ENCODE measurements at regions of chr5 and their contacts with region 1.

Region 1: DNA sequence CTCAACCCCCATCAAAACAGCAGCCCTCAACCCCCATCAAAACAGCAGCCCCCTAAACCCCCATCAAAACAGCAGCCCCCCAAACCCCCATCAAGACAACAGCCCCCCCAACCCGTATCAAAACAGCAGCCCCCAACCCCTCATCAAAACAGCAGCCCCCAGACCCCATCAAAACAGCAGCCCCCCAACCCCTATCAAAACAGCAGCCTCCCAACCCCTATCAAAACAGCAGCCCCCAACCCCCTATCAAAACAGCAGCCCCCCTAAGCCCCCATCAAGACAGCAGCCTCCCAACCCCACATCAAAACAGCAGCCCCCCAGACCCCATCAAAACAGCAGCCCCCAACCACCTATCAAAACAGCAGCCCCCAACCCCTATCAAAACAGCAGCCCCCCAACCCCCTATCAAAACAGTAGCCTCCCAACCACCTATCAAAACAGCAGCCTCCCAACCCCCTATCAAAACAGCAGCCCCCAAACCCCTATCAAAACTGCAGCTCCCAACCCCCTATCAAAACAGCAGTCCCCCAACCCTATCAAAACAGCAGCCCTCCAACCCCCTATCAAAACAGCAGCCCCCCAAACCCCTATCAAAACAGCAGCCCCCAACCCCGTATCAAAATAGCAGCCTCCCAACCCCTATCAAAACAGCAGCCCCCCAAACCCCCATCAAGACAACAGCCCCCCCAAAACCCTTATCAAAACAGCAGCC is 1.2 kb downstream of the TPPP start:
- DNase-seq: no peak
- H3K4me3 ChIP-seq: no peak overlapping the region
- H3K27ac ChIP-seq: no peak overlapping the region
- H3K4me1 ChIP-seq: no peaks in the 10 kb centered on the region
- H3K27me3 ChIP-seq: no peaks in the 10 kb centered on the region
- CTCF ChIP-seq: no peak

Region 2: DNA sequence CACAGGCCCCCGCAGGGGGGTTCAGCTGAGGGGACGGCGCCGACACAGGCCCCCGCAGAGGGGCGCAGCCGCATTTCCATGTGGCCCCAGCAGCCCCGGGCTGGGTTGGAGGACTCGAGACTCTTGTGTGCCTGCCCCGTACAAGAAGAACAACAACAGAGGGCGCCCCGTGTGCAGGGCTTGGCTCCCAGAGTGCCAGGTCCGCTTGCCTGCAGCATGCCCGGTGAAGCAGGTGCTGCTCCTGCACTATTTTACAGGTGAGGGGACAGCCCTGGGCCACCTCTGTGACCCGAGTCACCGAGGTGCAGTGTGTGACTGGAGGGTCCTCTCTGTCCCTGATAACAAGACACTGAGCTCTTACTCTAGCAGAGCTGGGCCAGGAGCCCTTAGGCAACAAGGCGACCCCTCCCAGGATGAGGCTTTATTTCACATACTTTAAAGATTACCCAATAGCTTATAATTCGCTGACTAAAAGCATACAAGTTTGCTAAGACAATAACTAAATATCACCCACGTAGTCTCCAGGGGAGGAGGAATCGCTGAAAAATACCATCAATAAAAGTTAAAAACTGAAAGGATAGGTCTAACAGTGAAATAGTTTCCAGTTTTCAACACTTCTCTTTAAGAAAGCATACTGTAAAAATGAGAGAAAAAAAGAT is 126.1 kb before region 1 on chr5:
- CTCF ChIA-PET with region 1: no interaction called
- dilution Hi-C with region 1: no loop called
- in situ Hi-C with region 1: no loop called
- intact Hi-C with region 1: no loop called
- DNase-seq: no peak
- H3K4me3 ChIP-seq: no peak overlapping the region
- H3K27ac ChIP-seq: no peak overlapping the region
- H3K4me1 ChIP-seq: peaks cover 4% of the 10 kb centered on the region
- H3K27me3 ChIP-seq: peaks cover 12% of the 10 kb centered on the region
- CTCF ChIP-seq: peak in 1 of 2 donors; percentile 27

Region 3: GRCh38 chr5:776792-777711 is 85.1 kb after region 1 on chr5:
- CTCF ChIA-PET with region 1: no interaction called
- dilution Hi-C with region 1: no loop called
- in situ Hi-C with region 1: loop called in 1 of 2 experiments (anchors 10 kb)
- intact Hi-C with region 1: no loop called
- DNase-seq: no peak
- H3K4me3 ChIP-seq: no peak overlapping the region
- H3K27ac ChIP-seq: no peak overlapping the region
- H3K4me1 ChIP-seq: no peaks in the 10 kb centered on the region
- H3K27me3 ChIP-seq: no peaks in the 10 kb centered on the region
- CTCF ChIP-seq: no peak

Region 4: DNA sequence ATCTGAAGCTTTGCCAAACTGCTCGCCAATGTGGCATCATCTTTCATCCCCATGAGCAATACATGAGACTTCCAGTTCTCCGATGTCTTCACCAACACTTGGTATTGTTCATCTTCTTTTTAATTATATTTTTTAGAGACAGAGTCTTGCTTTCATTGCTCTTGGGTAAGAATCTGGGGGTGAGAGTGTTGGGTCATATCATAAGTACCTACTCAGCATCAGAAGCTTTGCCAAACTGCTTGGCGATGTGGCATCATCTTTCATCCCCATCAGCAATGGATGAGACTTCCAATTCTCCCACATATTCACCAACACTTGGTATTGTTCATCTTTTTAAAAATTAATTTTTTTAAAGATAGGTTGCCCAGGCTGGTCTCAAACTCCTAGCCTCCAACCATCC is 123.5 kb after region 1 on chr5:
- CTCF ChIA-PET with region 1: no interaction called
- dilution Hi-C with region 1: no loop called
- in situ Hi-C with region 1: no loop called
- intact Hi-C with region 1: no loop called
- DNase-seq: no peak
- H3K4me3 ChIP-seq: no peak overlapping the region
- H3K27ac ChIP-seq: no peak overlapping the region
- H3K4me1 ChIP-seq: no peaks in the 10 kb centered on the region
- H3K27me3 ChIP-seq: no peaks in the 10 kb centered on the region
- CTCF ChIP-seq: no peak

Region 5: GRCh38 chr5:862367-863243 is 170.6 kb after region 1 on chr5:
- CTCF ChIA-PET with region 1: no interaction called
- dilution Hi-C with region 1: no loop called
- in situ Hi-C with region 1: no loop called
- intact Hi-C with region 1: no loop called
- DNase-seq: no peak
- H3K4me3 ChIP-seq: no peak overlapping the region
- H3K27ac ChIP-seq: no peak overlapping the region
- H3K4me1 ChIP-seq: peaks cover 25% of the 10 kb centered on the region
- H3K27me3 ChIP-seq: no peaks in the 10 kb centered on the region
- CTCF ChIP-seq: no peak